ENCODE measurements at regions of chr5 and their contacts with region 1.

Region 1: GRCh38 chr5:42994246-42995151 is 45.6 kb downstream of the ANXA2R start:
- DNase-seq: peak; percentile 91
- H3K4me3 Mint-ChIP-seq: peak overlapping the region; percentile 99
- H3K27ac Mint-ChIP-seq: peak overlapping the region; percentile 100
- H3K4me1 Mint-ChIP-seq: peaks cover 25% of the 10 kb centered on the region
- H3K27me3 Mint-ChIP-seq: no peaks in the 10 kb centered on the region

Region 2: DNA sequence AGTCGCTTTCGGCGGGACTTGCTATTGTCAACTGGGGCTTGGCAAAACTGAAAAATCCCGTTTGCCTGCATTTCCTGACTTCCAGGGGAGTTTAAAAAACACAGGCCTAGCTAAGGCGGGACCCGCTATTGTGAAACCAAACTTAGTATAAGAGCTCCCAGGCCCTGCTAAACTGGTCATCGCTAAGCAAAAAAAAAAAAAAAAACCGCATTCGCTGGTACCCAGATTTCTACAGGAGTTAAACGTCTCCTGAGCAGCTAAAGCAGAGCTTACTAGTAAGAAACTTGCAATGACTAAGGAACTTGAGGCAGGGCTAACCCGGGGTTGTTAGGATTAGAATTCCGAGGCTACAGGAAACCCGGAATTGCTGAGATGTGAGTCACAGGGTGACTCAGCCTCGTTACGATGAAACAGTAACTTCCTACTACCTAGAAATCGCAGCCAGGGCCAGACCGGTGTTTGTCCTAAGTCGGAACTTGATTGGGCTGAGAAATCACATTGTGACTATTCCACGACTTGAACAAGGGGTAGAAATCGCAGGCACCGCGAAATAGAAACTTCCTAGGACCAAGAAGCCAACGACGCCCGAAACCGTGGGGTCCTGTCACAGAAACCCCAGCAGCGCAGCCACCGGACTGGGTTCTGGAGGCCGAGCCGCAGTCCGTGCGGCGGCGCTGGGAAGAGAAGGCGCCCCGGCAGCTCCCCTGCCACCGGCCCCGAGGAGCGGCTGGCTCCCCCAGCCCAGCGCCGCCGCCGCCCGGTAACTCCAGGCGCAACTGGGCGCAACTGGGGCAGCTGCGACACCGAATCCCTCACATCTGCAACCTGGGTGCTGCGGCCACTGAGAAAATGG is 43.8 kb before region 1 on chr5:
- CTCF ChIA-PET with region 1: interaction called, 58 read pairs
- POLR2A ChIA-PET with region 1: interaction called, 393 read pairs
- DNase-seq: peak; percentile 77
- H3K4me3 Mint-ChIP-seq: peak overlapping the region; percentile 85
- H3K27ac Mint-ChIP-seq: peak overlapping the region; percentile 100
- H3K4me1 Mint-ChIP-seq: peaks cover 37% of the 10 kb centered on the region
- H3K27me3 Mint-ChIP-seq: no peaks in the 10 kb centered on the region

Region 3: DNA sequence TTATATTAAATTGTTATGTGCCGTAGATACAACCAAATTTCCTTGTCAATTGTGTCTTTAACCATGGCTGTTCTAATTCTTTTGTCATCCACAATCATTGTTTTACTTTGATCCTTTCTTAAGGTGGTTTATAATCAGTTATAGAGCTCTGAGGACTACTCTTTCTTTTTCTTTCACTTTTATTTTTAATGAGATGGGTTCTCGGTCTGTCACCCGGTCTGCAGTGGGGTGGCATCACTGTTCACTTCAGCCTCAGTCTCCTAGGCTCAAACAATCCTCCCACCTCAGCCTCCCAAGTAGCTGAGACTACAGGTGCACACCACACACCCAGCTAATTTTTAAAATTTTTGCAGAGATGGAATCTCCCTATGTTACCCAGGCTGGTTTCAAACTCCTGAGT is 28.6 kb before region 1 on chr5:
- CTCF ChIA-PET with region 1: no interaction called
- POLR2A ChIA-PET with region 1: interaction called, 20 read pairs
- DNase-seq: no peak
- H3K4me3 Mint-ChIP-seq: peak overlapping the region; percentile 30
- H3K27ac Mint-ChIP-seq: peak overlapping the region; percentile 29
- H3K4me1 Mint-ChIP-seq: peaks cover 9% of the 10 kb centered on the region
- H3K27me3 Mint-ChIP-seq: peaks cover 2% of the 10 kb centered on the region

Region 4: DNA sequence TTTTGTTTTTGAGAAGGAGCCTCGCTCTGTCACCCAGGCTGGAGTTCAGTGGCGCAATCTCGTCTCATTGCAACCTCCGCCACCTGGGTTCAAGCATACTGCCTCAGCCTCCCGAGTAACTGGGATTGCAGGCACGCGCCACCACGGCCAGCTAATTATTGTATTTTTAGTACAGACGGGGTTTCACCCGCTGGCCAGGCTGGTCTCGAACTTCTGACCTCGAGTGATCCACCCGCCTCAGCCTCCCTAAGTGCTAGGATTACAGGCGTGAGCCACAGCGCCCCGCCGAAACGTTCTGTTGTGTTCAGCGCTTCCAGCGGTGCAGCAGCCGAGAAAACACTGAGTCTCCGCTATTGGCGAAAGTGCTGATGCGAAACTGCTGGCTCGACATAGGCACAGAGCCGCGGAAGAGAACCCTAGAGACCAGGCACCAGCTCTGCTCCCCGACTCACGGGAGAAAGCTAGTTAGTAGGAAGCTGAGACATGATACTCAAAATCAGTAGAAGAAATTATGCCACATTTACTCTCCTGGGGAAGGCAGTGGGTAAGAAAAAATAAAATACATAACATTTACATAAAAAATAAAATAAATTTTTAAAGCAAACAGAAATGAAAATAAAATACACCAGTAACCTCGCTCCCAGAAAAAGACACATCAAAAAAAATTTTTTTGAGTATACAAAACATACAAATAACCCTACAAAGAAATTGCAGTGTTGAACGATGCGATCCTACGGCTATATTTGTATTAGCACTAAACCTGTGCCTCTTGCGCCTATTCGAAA is 14.1 kb after region 1 on chr5:
- CTCF ChIA-PET with region 1: interaction called, 83 read pairs
- POLR2A ChIA-PET with region 1: interaction called, 513 read pairs
- DNase-seq: peak; percentile 93
- H3K4me3 Mint-ChIP-seq: peak overlapping the region; percentile 89
- H3K27ac Mint-ChIP-seq: peak overlapping the region; percentile 97
- H3K4me1 Mint-ChIP-seq: peaks cover 39% of the 10 kb centered on the region
- H3K27me3 Mint-ChIP-seq: peaks cover 5% of the 10 kb centered on the region

Region 5: GRCh38 chr5:43019614-43020293 is 25.3 kb after region 1 on chr5:
- CTCF ChIA-PET with region 1: interaction called, 105 read pairs
- POLR2A ChIA-PET with region 1: interaction called, 513 read pairs
- DNase-seq: peak; percentile 90
- H3K4me3 Mint-ChIP-seq: peak overlapping the region; percentile 93
- H3K27ac Mint-ChIP-seq: peak overlapping the region; percentile 99
- H3K4me1 Mint-ChIP-seq: peaks cover 42% of the 10 kb centered on the region
- H3K27me3 Mint-ChIP-seq: no peaks in the 10 kb centered on the region